Sciatic nerve (tissue), 2 donors: ENCODE measurements at regions of chr4 and their contacts with region 1.

Region 1: GRCh38 chr4:86398187-86398586 is 38.3 kb upstream of the MAPK10 start:
- DNase-seq: no peak
- ATAC-seq: no peak

Region 2: DNA sequence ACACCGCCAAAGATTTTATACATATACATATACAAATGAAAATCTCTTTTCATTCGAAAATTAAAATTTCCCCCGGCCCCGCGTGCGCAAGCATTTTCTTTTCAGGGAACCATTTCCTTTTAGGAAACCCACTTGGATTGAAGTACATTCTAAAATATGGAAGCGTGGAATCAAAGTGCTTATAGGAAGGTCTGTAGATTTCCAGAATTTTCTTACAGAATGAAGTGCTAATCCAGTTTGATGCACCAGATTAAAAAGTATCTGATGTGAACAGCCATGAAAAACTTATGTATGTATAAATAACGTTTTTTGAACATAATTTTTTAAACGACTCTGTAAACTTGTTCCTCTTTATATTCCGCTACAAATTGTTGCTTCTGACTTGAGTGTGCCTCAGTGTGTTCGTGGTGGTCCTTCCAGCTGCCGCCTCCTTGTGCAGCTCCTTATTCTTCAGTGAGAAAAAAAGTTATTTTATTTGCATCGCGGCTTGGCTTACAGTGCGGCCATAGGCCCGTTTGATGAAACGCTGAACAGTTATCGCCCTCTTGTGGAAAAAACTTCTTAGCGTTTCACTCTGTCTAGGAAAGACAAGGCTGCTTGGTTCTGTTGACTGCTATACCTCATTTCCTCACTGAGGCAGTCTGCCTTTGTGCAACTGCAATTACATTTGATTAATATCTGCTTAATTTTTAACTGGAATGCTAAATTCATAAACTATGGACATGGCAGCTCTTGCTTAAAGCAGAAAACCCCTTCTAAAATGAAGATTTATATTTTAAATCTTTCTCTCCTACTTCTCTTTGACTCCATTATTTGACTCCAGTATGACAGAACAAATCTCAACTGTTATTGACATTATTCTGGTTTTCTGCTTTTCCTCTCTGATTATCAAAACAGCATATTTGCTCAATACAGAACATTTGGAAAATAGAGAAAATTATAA is 1894.4 kb before region 1 on chr4:
- intact Hi-C with region 1: loop called (anchors 10 kb)
- DNase-seq: no peak
- ATAC-seq: peak; percentile 74